ENCODE measurements at regions of chr19 and their contacts with region 1.

Region 1: GRCh38 chr19:8654591-8655339 is 24.3 kb downstream of the NFILZ start:
- DNase-seq: peak; percentile 72
- H3K4me3 ChIP-seq: peak overlapping the region in 1 of 4 donors; percentile 10
- H3K27ac ChIP-seq: no peak overlapping the region
- H3K4me1 ChIP-seq: peaks cover 0 to 4% (median 2%) of the 10 kb centered on the region in 4 donors
- H3K27me3 ChIP-seq: peaks cover 0 to 11% (median 3%) of the 10 kb centered on the region in 3 donors
- CTCF ChIP-seq: peak; percentile 43 to 99 (median 92)
- EP300 ChIP-seq: no peak
- POLR2A ChIP-seq: no peak

Region 2: DNA sequence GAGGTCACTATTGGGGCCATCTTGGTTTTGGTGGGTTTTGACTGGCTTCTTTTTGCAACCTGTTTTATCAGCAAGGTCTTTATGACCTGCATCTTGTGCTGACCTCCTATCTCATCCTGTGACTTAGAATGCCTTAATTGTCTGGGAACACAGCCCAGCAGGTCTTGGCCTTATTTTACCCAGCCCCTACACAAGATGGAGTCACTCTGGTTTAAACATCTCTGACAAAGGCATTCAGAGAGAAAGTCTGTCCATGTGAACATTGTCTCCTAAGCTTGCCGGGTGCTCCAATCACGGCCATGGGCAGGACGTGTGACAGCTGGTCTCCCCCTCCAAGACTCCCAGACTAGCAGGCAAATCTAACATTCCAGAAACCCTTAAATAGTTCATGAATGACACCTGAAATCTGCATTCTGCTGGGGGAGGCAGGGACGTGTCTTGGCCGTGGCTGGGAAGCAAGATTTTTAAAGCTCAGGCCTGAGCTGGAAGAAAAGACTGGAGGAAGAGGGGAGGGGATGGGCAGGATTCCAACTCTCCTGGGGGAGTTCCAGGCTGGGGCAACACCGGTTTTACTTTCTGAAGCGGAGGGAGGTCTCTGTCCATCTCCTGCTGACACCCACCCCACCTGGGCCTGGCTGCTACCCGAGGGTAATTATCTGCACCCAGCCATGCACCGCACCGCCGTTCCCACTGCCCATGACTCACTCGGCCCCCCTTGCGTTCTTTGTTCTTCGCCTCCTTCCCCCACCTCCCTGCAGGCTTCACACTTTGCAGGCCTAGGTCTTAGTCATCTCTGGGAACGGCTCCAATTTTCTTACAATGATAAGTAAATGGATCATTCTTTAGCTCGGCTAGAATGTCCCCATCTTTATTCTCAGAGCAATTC is 420.5 kb after region 1 on chr19:
- intact Hi-C with region 1: loop called (anchors 1 kb)
- DNase-seq: peak; percentile 90
- H3K4me3 ChIP-seq: no peak overlapping the region
- H3K27ac ChIP-seq: peak overlapping the region; percentile 73 to 89 (median 77)
- H3K4me1 ChIP-seq: peaks cover 0 to 27% (median 23%) of the 10 kb centered on the region in 4 donors
- H3K27me3 ChIP-seq: no peaks in the 10 kb centered on the region
- CTCF ChIP-seq: no peak
- EP300 ChIP-seq: peak in 1 of 4 donors; percentile 33
- POLR2A ChIP-seq: no peak

Measured in sigmoid colon (tissue), 7 donors.